Activated CD8-positive, alpha-beta T cell treated with anti-CD3 and anti-CD28 coated beads, Interleukin-2, amount 10 ng/mL, durations not matched to agents 7 days and 5 days (primary cell): ENCODE measurements at regions of chr22 and their contacts with region 1.

Region 1: GRCh38 chr22:30196141-30196879 is 50.2 kb downstream of the LIF start:
- DNase-seq: peak; percentile 81
- ATAC-seq: peak; percentile 72
- H3K4me3 Mint-ChIP-seq: peak overlapping the region; percentile 47
- H3K27ac Mint-ChIP-seq: peak overlapping the region; percentile 94
- H3K4me1 Mint-ChIP-seq: peaks cover 81% of the 10 kb centered on the region
- H3K27me3 Mint-ChIP-seq: no peaks in the 10 kb centered on the region

Region 2: DNA sequence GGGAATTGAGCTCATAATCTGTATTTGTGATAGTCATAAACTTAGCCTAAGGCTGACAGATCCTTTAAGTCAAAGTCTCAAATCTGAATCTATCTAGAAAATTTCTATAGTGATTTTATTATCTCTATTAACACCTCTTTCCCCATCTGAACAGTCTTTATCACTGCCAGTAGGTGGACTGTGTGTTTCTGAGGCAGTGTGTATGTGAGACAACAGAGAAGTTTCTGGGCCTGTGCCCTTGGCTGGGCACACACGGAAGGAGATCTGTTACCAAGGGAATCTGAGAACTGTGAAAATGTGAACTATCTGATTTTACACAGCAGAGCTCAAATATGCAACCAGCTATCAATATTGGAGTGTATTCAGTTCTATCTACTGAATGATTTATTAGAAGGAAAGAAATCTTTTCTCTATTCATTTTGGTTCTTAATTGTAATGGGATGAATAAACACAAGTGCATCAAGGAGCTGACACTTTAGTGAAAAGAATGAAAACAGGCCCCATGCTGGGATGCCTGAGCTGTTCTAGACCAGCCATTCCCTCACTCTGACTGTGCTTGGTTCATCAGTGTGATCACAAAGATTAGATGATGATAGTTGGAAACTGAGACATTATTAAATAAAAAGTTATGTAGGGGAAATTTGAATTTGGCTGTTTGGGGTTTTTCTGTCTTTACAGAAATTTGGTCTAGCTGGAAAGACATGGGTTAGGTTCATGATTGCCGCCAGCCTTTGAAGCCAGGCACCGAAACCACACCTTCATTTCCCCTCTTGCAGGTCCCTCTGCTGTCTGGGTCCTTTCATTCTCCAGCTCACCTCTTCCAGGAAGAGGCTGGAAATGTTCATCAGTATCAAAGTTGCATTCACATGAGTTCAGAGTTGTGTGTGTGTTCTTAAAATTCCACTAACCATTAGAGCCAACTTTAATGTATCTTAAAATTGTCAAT is 17.9 kb before region 1 on chr22:
- CTCF ChIA-PET with region 1: interaction called, 44 read pairs
- POLR2A ChIA-PET with region 1: interaction called, 16 read pairs
- DNase-seq: peak; percentile 74
- ATAC-seq: peak; percentile 82
- H3K4me3 Mint-ChIP-seq: peak overlapping the region; percentile 35
- H3K27ac Mint-ChIP-seq: peak overlapping the region; percentile 93
- H3K4me1 Mint-ChIP-seq: peaks cover 88% of the 10 kb centered on the region
- H3K27me3 Mint-ChIP-seq: no peaks in the 10 kb centered on the region

Region 3: DNA sequence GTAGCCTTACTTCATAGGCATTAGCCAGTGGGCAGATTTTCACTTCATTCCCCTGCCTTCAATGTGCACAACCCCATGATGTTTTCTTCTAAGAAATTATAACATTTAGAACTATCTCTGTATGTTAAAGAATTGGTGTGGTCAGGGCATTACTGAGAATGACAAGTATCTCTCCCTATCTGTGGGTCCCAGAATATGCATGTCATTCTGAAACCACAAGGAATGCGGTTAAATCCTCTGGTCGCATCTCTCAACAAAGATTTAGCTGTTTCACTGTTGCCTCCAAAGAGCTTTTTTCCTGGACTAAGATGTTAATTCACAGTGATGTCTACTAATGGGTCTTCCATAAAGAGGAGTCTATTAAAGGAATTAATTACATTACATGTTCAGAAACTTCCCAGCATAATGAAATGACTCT is 12.4 kb before region 1 on chr22:
- CTCF ChIA-PET with region 1: interaction called, 44 read pairs
- POLR2A ChIA-PET with region 1: interaction called, 16 read pairs
- DNase-seq: peak; percentile 64
- ATAC-seq: peak; percentile 70
- H3K4me3 Mint-ChIP-seq: peak overlapping the region; percentile 55
- H3K27ac Mint-ChIP-seq: peak overlapping the region; percentile 96
- H3K4me1 Mint-ChIP-seq: peaks cover 94% of the 10 kb centered on the region
- H3K27me3 Mint-ChIP-seq: no peaks in the 10 kb centered on the region

Region 4: DNA sequence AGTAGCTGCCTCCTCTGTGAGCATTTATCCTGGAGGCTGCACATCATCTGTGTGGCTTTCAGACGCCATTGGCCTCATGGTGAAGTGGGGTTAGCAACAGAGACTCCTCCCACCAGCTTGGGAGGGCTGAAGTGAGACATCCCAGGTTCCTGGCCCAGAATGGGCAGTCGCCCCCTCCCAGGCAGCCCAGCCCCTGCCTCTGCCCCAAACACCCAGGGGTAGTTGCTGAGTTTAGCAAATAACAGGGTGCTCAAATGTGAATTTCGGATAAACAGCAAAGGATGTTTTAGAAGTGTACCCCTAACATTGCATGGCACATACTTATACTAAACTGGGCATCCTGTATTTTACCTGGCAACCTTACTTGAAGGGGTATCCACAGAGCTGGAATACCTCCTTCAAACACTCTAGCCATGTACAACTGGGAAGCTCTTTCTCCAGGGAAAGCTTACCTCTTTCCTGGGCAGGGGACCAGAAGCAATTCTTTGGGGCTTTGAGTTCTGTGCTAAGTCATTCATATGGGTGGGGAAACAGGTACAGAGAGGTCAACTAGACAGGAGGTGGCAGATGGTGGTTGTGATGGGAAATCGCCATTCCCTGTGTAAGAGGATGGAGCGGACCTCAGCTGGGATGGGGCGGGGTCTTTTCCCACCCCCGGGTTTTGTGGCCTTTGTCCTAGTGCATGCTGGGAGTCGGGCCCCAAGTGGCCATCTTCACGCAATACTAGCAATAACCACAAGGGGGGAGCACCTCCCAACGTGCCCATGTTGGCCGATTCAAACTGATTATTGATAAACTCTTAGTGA is 248.5 kb after region 1 on chr22:
- CTCF ChIA-PET with region 1: no interaction called
- POLR2A ChIA-PET with region 1: no interaction called
- DNase-seq: peak; percentile 70
- ATAC-seq: peak; percentile 43
- H3K4me3 Mint-ChIP-seq: no peak overlapping the region
- H3K27ac Mint-ChIP-seq: no peak overlapping the region
- H3K4me1 Mint-ChIP-seq: peaks cover 32% of the 10 kb centered on the region
- H3K27me3 Mint-ChIP-seq: peaks cover 18% of the 10 kb centered on the region